Body of pancreas (tissue), 4 donors: ENCODE measurements at regions of chr9 and their contacts with region 1.

Region 1: GRCh38 chr9:103942651-103943050 is 151.5 kb upstream of the SMC2 start:
- DNase-seq: no peak
- ATAC-seq: no peak
- H3K4me3 ChIP-seq: no peak overlapping the region
- H3K27ac ChIP-seq: no peak overlapping the region
- H3K4me1 ChIP-seq: no peaks in the 10 kb centered on the region
- H3K27me3 ChIP-seq: no peaks in the 10 kb centered on the region
- CTCF ChIP-seq: no peak
- POLR2A ChIP-seq: no peak

Region 2: GRCh38 chr9:105026451-105026850 is 1083.8 kb after region 1 on chr9:
- intact Hi-C with region 1: no loop called
- DNase-seq: no peak
- ATAC-seq: no peak
- H3K4me3 ChIP-seq: no peak overlapping the region
- H3K27ac ChIP-seq: no peak overlapping the region
- H3K4me1 ChIP-seq: no peaks in the 10 kb centered on the region
- H3K27me3 ChIP-seq: no peaks in the 10 kb centered on the region
- CTCF ChIP-seq: no peak
- POLR2A ChIP-seq: no peak

Region 3: DNA sequence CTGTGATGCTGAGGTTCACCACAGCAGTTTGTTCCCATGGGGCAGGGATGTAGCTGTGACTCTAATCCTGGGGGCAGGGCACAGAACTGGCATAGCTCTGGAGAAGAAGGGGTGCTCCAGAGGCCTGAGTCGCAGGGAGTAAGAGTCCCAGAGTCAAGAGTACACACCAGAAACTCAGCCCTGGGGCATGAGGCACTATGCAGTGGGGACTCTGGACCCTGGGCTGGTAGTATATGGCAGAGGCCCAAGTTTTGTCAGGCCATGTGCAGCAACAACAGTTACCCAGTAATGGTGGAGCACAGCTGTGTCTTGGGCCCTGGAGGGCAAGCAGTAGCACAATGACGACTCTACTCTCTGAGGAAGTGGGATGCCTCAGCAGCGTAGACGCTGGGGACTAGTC is 1794.6 kb after region 1 on chr9:
- intact Hi-C with region 1: loop called (anchors 10 kb)
- DNase-seq: no peak
- ATAC-seq: no peak
- H3K4me3 ChIP-seq: no peak overlapping the region
- H3K27ac ChIP-seq: no peak overlapping the region
- H3K4me1 ChIP-seq: no peaks in the 10 kb centered on the region
- H3K27me3 ChIP-seq: no peaks in the 10 kb centered on the region
- CTCF ChIP-seq: no peak
- POLR2A ChIP-seq: no peak